ENCODE measurements at regions of chr4 and their contacts with region 1.

Region 1: GRCh38 chr4:73653695-73654106 is 33.5 kb upstream of the RASSF6 start:
- H3K4me3 ChIP-seq: no peak overlapping the region
- H3K27ac ChIP-seq: no peak overlapping the region
- H3K4me1 ChIP-seq: no peaks in the 10 kb centered on the region
- CTCF ChIP-seq: peak; percentile 56; the same call in 1 of the 2 replicates

Region 2: GRCh38 chr4:73593631-73594241 is 60.0 kb before region 1 on chr4:
- CTCF ChIA-PET with region 1: interaction called, 18 read pairs
- POLR2A ChIA-PET with region 1: interaction called, 8 read pairs
- H3K4me3 ChIP-seq: no peak overlapping the region
- H3K27ac ChIP-seq: no peak overlapping the region
- H3K4me1 ChIP-seq: peaks cover 8% of the 10 kb centered on the region
- CTCF ChIP-seq: no peak